Calu3 (cell line): ENCODE measurements at regions of chr9 and their contacts with region 1.

Region 1: DNA sequence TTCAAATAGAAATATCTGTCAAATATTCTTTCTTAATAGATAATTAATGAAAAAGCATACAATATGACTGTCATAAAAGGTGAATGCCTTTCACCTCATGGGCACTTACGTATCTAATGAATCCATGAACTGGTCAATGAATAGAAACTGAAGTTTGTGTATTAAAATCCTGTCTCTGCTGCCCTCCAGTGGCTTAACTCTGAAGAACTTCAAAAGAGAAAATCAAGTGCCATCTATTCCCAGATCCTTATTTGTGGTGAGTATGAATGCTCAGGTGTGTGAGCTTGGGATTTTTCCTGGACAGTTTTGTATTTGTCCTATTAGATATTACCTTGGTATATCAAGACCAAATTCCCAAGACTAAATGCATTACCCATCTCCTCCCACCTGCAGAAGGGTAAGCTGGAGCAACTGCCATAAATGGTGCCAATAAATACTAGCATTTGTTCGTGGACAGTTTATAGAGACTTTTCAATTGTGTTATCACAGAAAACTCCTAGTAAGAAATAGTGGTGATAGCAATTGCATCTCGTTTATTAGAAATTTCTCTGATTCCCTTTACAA is 44.0 kb upstream of the SVEP1 start:
- DNase-seq: peak; percentile 41
- H3K4me3 Mint-ChIP-seq: no peak overlapping the region
- H3K27ac Mint-ChIP-seq: no peak overlapping the region
- H3K4me1 Mint-ChIP-seq: peaks cover 9% of the 10 kb centered on the region
- H3K27me3 Mint-ChIP-seq: no peaks in the 10 kb centered on the region
- CTCF ChIP-seq: peak; percentile 40

Region 2: DNA sequence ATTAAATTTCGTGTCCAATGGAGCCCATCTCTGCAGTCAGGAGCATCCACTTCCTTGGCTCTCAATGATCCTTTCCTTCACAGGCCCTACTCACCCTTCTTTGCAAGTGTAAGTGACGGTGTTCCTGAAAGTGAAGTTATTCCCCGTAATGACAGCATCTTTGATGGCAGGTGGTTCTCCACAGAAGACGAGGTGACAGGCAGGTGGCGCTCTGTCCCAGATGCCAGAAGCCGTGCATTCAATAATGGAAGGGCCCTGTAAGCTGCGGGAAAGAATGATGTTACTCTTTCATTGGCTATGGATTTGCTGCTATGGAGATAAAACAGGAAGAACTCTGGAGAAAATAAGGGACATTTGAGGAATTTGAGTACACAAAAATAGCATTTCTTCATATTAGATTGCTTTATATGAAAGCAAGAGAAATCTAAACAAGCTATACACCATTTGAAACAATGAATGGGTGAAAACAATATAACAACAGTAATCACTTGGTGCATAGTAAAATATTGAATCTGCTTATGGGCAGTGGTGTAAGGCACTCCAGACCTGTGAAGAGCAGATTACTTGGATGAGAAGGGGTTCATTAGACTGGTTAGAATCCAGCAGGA is 195.9 kb before region 1 on chr9:
- CTCF ChIA-PET with region 1: no interaction called
- intact Hi-C with region 1: loop called (anchors 5 kb)
- DNase-seq: peak; percentile 56
- H3K4me3 Mint-ChIP-seq: no peak overlapping the region
- H3K27ac Mint-ChIP-seq: no peak overlapping the region
- H3K4me1 Mint-ChIP-seq: no peaks in the 10 kb centered on the region
- H3K27me3 Mint-ChIP-seq: no peaks in the 10 kb centered on the region
- CTCF ChIP-seq: peak; percentile 21

Region 3: GRCh38 chr9:110452227-110452801 is 171.2 kb before region 1 on chr9:
- CTCF ChIA-PET with region 1: interaction called, 4 read pairs
- intact Hi-C with region 1: loop called (anchors 1 kb)
- DNase-seq: no peak
- H3K4me3 Mint-ChIP-seq: no peak overlapping the region
- H3K27ac Mint-ChIP-seq: no peak overlapping the region
- H3K4me1 Mint-ChIP-seq: no peaks in the 10 kb centered on the region
- H3K27me3 Mint-ChIP-seq: no peaks in the 10 kb centered on the region
- CTCF ChIP-seq: no peak

Region 4: DNA sequence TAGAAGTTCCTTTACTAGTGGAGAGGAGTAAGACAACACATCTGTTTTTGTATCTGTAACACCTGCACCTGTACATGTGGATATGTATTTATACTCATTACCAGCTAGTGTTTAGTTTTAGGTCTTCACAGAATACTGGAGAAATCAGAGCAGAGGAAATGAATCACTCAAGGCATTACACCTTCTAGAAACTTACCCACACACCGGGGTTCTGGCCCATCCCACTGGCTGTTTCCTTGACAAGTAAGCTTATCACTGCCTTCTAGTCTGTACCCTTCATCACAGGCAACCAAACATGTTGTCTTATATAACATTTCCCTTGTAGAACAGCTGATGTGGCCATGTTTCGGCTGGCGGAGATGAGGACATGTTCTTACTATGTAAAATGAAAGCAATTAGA is 120.7 kb before region 1 on chr9:
- CTCF ChIA-PET with region 1: no interaction called
- intact Hi-C with region 1: no loop called
- DNase-seq: no peak
- H3K4me3 Mint-ChIP-seq: no peak overlapping the region
- H3K27ac Mint-ChIP-seq: no peak overlapping the region
- H3K4me1 Mint-ChIP-seq: no peaks in the 10 kb centered on the region
- H3K27me3 Mint-ChIP-seq: peaks cover 27% of the 10 kb centered on the region
- CTCF ChIP-seq: no peak

Region 5: GRCh38 chr9:110847671-110848070 is 224.1 kb after region 1 on chr9:
- CTCF ChIA-PET with region 1: no interaction called
- intact Hi-C with region 1: no loop called
- DNase-seq: no peak
- H3K4me3 Mint-ChIP-seq: no peak overlapping the region
- H3K27ac Mint-ChIP-seq: no peak overlapping the region
- H3K4me1 Mint-ChIP-seq: no peaks in the 10 kb centered on the region
- H3K27me3 Mint-ChIP-seq: no peaks in the 10 kb centered on the region
- CTCF ChIP-seq: no peak